Head of caudate nucleus (tissue), 42 donors: ENCODE measurements at regions of chr1 and their contacts with region 1.

Region 1: GRCh38 chr1:16243936-16244649 is 7.1 kb upstream of the CPLANE2 start:
- DNase-seq: peak; percentile 42 to 92 (median 79)

Region 2: GRCh38 chr1:16351994-16352841 is 108.1 kb after region 1 on chr1 and contains the start of gene FBXO42:
- intact Hi-C with region 1: loop called (anchors 10 kb)
- DNase-seq: peak; percentile 63 to 95 (median 90)